Posterior vena cava (tissue), 2 donors: ENCODE measurements at regions of chr4 and their contacts with region 1.

Region 1: DNA sequence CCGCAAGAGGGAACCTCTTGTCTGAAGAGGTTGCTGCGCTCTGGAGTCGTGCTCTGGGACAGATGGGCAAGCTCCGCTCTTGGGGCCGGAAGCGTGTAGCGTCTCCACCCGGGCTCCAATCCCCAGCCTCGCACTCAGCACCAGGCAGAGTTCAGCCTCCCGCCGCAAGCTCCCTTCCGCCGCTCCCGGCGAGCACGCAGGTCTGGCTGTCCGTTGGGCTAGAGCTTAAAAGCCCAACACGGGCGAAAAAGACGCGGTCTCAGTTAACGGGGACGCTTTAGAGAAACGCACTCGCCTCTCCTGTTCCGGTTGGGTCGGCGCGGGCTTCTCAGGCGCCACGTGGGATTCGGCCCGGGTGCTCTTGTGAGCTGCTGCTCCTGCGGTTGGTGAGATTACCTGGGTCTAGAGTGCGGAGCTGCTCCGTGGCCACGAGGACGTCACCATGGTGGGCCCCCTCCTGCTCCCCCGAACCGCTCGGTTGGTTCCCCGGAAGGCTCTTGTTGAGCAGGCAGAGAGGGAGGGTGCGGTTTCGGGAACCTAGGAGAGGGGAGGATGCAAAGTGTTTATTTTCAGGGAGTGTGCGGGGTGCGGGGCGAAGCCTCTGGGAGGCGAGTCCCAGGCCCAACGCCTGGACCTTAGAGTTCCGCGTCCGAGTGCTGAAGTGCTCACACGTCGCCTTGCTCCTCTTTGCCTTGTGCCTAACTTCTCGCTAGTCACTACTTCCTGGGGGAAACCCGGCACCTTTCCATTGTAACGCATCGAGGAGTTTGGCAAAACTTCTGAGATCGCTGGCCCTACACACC is at the start of gene TMA16:
- DNase-seq: peak; percentile 96
- total RNA-seq, gene TMA16: 30.2 to 31.4 TPM

Region 2: GRCh38 chr4:163332500-163333406 is 161.8 kb before region 1 on chr4 and contains the start of gene NPY1R:
- intact Hi-C with region 1: loop called in 1 of 2 experiments (anchors 10 kb)
- DNase-seq: peak; percentile 88
- total RNA-seq, gene NPY1R: 61.9 to 147 TPM

Region 3: DNA sequence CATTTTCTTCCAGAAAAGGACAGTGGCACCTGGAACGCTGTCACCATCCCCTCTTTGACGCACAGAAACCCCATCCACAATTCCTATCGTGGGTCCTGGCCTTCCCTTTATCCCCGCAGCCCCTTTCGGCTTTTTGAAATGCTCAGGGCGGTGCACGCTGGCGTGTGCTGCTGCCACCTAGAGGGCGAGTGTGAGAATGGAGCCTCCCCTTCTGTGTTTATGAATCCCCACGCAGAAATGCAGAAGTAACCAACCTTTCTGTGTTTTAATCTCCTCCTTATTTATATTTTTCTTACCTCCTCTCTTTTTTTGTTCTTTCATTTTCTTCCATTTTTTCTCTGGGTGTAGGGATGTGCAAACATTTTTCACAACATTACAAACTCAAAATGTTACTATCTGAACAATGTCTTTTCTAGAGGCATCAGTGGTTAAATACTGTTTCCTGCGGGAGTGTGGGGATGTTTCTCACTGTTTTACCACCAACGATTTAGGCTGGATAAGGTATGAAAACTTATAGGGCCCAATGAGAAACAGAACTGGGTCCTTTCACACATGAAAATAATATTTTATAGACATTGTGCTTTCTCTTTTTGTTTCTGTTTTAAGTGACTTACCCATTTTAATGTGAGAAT is 50.0 kb after region 1 on chr4:
- intact Hi-C with region 1: loop called (anchors 2 to 10 kb)
- DNase-seq: peak; percentile 84

Region 4: GRCh38 chr4:165378745-165379677 is 1884.5 kb after region 1 on chr4 and contains the start of gene CPE:
- intact Hi-C with region 1: loop called in 1 of 2 experiments (anchors 10 kb)
- DNase-seq: peak; percentile 95
- total RNA-seq, gene CPE: 334 to 383 TPM